ENCODE measurements at regions of chr19 and their contacts with region 1.

Region 1: GRCh38 chr19:46661020-46661731 is at the start of gene DACT3:
- DNase-seq: peak; percentile 96
- H3K4me3 ChIP-seq: peak within 1 kb of the TSS; percentile 69 to 88
- H3K27ac ChIP-seq: peak within 1 kb of the TSS; percentile 52 to 84; a peak in 3 of 4 replicates
- H3K4me1 ChIP-seq: peaks cover 0 to 18% of the 10 kb centered on the region in 2 experiments; a peak in 1 of 4 replicates
- H3K27me3 ChIP-seq: no peaks in the 10 kb centered on the region
- CTCF ChIP-seq: no peak
- EP300 ChIP-seq: no peak
- RAD21 ChIP-seq: no peak
- polyA plus RNA-seq, gene DACT3: 9.5 and 10.6 TPM in 2 replicates

Region 2: DNA sequence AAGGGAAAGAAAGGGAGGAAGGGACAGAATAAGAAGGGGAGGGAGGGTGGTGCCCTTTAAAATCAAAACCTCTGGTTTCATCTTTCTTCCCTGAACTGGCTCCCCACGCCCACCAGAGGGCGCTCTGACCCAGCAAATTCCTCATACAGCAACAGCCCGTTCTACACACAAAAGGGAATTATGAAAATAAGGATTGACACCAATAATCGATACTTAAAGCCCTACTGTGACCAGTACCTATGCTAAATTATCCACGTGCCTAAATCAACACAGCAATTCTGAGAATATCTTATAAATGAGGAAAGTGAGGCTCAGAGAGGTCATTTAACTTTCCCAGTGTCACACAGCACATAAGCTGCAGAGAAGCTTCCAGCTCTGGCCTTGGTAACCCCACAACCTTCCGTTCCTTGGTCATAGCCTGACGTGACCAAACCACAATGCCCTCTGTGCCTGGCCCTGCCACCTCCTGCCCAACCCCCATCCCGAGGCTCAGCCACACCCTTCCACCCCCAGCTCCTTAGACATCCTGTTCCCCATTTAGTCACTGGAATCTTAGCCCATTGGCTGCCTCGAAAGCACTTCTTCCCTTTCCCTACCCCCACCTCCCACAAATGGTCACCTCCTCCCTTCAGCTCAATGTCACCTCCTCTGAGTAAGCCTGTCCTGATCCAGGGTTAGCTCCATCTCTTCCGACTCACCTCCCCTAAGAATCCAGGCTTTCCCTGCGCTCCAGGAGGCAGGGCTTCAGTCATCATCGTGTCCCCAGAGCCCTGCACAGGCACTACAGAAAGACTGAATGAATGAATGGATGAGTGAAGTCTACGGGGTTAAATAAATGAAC is 131.3 kb before region 1 on chr19:
- CTCF ChIA-PET with region 1: interaction called, 11 read pairs
- POLR2A ChIA-PET with region 1: no interaction called
- DNase-seq: peak; percentile 81
- H3K4me3 ChIP-seq: peak overlapping the region in 1 of 2 experiments; percentile 35; a peak in 1 of 4 replicates
- H3K27ac ChIP-seq: no peak overlapping the region
- H3K4me1 ChIP-seq: peaks cover 0 to 28% of the 10 kb centered on the region in 2 experiments; a peak in 1 of 4 replicates
- H3K27me3 ChIP-seq: no peaks in the 10 kb centered on the region
- CTCF ChIP-seq: peak; percentile 88
- EP300 ChIP-seq: no peak
- RAD21 ChIP-seq: peak; percentile 95

Region 3: GRCh38 chr19:46614114-46614722 is 47.0 kb before region 1 on chr19:
- CTCF ChIA-PET with region 1: interaction called, 471 read pairs
- POLR2A ChIA-PET with region 1: interaction called, 14 read pairs
- DNase-seq: peak; percentile 91
- H3K4me3 ChIP-seq: peak overlapping the region in 1 of 2 experiments; percentile 8; a peak in 1 of 4 replicates
- H3K27ac ChIP-seq: peak overlapping the region in 1 of 2 experiments; percentile 31; a peak in 1 of 4 replicates
- H3K4me1 ChIP-seq: peaks cover 0 to 28% of the 10 kb centered on the region in 2 experiments; a peak in 2 of 4 replicates
- H3K27me3 ChIP-seq: no peaks in the 10 kb centered on the region
- CTCF ChIP-seq: peak; percentile 84
- EP300 ChIP-seq: no peak
- RAD21 ChIP-seq: peak; percentile 92

Region 4: GRCh38 chr19:46634045-46634655 is 27.0 kb before region 1 on chr19:
- CTCF ChIA-PET with region 1: interaction called, 106 read pairs
- POLR2A ChIA-PET with region 1: interaction called, 31 read pairs
- DNase-seq: peak; percentile 90
- H3K4me3 ChIP-seq: peak overlapping the region in 1 of 2 experiments; percentile 48; a peak in 2 of 4 replicates
- H3K27ac ChIP-seq: peak overlapping the region in 1 of 2 experiments; percentile 92; a peak in 2 of 4 replicates
- H3K4me1 ChIP-seq: peaks cover 16 to 56% of the 10 kb centered on the region in 2 experiments
- H3K27me3 ChIP-seq: no peaks in the 10 kb centered on the region
- CTCF ChIP-seq: no peak
- EP300 ChIP-seq: no peak
- RAD21 ChIP-seq: no peak

Region 5: DNA sequence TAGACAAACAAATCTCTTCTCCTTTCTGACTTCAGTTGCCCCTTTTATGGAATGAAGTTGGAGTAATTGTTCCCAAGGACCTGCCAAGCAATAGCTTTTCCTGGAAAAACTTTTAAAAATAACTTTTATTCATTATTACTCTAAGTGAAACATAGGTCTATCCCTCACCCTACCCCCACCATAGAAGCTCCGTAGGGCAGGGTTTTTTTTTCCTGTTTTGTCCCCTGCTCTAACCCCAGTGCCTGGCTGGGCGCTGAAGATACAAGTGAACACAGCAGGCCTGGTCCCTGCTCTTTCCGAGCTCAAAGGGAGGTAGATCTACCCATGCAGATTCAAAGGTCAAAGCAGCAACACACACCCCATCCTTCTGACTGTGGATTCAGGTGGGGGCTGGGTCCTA is 16.5 kb before region 1 on chr19:
- CTCF ChIA-PET with region 1: interaction called, 17 read pairs
- POLR2A ChIA-PET with region 1: interaction called, 9 read pairs
- DNase-seq: no peak
- H3K4me3 ChIP-seq: no peak overlapping the region
- H3K27ac ChIP-seq: no peak overlapping the region
- H3K4me1 ChIP-seq: peaks cover 6 to 11% of the 10 kb centered on the region in 2 experiments; a peak in 2 of 4 replicates
- H3K27me3 ChIP-seq: no peaks in the 10 kb centered on the region
- CTCF ChIP-seq: no peak
- EP300 ChIP-seq: no peak
- RAD21 ChIP-seq: no peak

Region 6: GRCh38 chr19:46717034-46717723 is 56.0 kb after region 1 on chr19 and contains the start of gene PRKD2:
- CTCF ChIA-PET with region 1: interaction called, 10 read pairs
- POLR2A ChIA-PET with region 1: no interaction called
- DNase-seq: peak; percentile 98
- H3K4me3 ChIP-seq: peak within 1 kb of the TSS; percentile 85 to 88
- H3K27ac ChIP-seq: peak within 1 kb of the TSS; percentile 79 to 91
- H3K4me1 ChIP-seq: peaks cover 0 to 19% of the 10 kb centered on the region in 2 experiments; a peak in 2 of 4 replicates
- H3K27me3 ChIP-seq: no peaks in the 10 kb centered on the region
- CTCF ChIP-seq: no peak
- EP300 ChIP-seq: no peak
- RAD21 ChIP-seq: no peak
- polyA plus RNA-seq, gene PRKD2: 14.1 and 21.4 TPM in 2 replicates

Region 7: DNA sequence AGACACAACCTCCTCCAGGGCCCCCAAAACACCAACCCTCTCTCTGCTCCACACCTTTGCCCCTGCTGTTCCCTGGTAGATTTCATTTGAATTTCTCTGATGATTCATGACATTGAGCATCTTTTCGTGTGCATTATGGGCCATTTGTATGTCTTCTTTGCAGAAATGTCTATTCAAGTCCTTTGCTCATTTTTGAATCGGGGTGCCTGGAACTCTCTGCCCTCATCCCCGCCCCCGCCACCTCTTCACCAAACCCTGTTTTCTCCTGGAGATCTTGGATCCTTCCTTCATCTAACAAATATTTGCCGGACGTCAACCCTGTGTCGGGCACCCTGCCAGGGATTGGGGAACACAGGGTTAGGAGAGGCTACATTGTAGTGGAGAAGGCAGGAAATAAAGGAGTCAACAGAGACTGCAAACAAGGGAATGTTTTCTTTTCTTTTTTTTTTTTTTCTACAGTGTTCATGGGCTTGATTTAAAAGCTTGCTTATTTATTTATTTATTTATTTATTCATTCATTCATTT is 152.7 kb after region 1 on chr19:
- CTCF ChIA-PET with region 1: no interaction called
- POLR2A ChIA-PET with region 1: no interaction called
- DNase-seq: no peak
- H3K4me3 ChIP-seq: no peak overlapping the region
- H3K27ac ChIP-seq: no peak overlapping the region; a peak in 1 of 4 replicates
- H3K4me1 ChIP-seq: peaks cover 0 to 13% of the 10 kb centered on the region in 2 experiments; a peak in 1 of 4 replicates
- H3K27me3 ChIP-seq: no peaks in the 10 kb centered on the region
- CTCF ChIP-seq: no peak
- EP300 ChIP-seq: no peak; a peak in 1 of 4 replicates
- RAD21 ChIP-seq: no peak

Measured in SK-N-SH (cell line).